CD8-positive, alpha-beta memory T cell (primary cell): ENCODE measurements at regions of chr16 and their contacts with region 1.

Region 1: GRCh38 chr16:66406534-66407221 is 20.4 kb upstream of the BEAN1 start:
- DNase-seq: peak; percentile 74 to 89 (median 82)
- H3K4me3 ChIP-seq: peak overlapping the region; percentile 75
- H3K4me3 Mint-ChIP-seq: peak overlapping the region; percentile 81 to 93 (median 85)
- H3K27ac ChIP-seq: no peak overlapping the region
- H3K27ac Mint-ChIP-seq: peak overlapping the region in 4 of 8 donors; percentile 29 to 76 (median 64)
- H3K4me1 ChIP-seq: peaks cover 21% of the 10 kb centered on the region
- H3K4me1 Mint-ChIP-seq: peaks cover 25 to 29% (median 28%) of the 10 kb centered on the region in 3 donors
- H3K27me3 ChIP-seq: no peaks in the 10 kb centered on the region
- H3K27me3 Mint-ChIP-seq: peaks cover 0 to 12% of the 10 kb centered on the region in 2 donors

Region 2: DNA sequence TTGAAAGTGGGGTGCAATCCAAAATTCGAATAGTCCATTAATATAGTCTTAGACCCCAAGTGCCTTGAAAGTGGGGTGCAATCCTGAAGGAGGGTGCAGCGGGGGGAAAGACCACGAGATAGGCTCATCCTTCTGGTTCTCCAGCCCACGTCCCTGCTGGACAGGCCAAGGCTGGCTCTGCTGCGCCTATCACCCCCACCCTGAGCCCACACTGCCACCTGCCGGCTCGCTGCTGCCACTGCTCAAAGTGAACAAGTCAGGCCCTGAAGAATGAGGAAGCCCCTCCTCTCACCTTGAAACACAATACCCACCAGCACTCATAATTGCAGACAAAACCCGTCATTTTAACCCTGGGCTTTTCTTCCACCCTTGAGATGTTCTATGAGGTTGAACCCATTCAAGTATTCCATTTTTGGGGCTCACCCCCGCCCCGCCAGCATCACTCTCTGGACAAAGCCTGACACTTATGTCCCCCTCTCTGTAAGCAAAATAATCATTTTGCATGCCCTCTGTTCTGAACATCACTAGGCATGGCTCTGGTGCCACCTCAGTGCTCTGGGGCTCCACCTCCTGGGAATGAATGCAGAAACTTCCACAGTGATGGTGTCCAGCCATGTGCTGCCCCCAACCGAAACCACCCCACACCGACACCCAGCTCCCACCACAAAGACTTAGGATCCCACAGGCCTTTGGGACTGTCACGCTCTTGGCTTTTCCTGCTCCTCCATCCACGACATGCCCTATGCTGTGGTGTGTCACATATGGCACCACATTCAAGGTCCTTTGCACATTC is 77.2 kb after region 1 on chr16:
- CTCF ChIA-PET with region 1: interaction called, 57 read pairs
- POLR2A ChIA-PET with region 1: no interaction called
- DNase-seq: peak; percentile 60 to 81 (median 65)
- H3K4me3 ChIP-seq: no peak overlapping the region
- H3K4me3 Mint-ChIP-seq: no peak overlapping the region
- H3K27ac ChIP-seq: no peak overlapping the region
- H3K27ac Mint-ChIP-seq: peak overlapping the region in 6 of 8 donors; percentile 8 to 95 (median 52)
- H3K4me1 ChIP-seq: peaks cover 10% of the 10 kb centered on the region
- H3K4me1 Mint-ChIP-seq: peaks cover 11 to 23% (median 14%) of the 10 kb centered on the region in 3 donors
- H3K27me3 ChIP-seq: no peaks in the 10 kb centered on the region
- H3K27me3 Mint-ChIP-seq: no peaks in the 10 kb centered on the region

Region 3: DNA sequence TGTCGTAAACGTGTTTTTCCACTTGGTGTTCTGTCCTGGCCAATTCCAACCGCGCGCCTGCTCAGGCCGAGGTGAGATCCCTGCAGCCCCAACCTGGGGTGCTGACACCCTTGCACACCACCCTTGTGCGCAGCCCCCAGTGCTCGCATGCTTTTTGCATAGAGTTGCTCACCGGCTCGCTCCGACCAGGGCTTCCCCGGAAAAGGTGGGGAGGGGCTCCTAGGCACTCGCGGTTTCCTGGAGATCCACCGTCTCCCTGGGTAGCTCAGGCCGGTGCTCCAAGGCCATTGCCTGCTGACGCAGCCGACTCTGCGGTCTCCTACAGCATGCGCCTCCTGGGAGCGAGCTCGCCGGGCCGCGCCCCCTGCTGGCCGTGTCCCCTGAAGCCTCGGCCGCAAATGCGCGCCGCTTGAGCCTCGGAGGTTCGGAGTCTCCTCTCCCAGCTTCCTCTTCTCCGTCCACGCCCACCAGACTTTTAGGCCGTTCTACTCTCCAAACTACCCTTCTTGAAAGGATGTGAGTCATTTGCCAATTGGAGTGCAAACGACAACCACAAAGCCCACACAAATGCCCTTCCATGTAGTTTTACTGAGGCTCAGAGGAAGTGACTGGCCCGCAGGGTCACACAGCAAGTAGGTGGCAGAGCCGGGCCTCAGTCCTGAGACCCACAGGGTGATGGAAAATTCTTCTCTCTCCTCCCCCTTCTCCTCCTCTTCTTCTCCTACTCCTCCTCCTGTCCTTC is 466.4 kb after region 1 on chr16:
- CTCF ChIA-PET with region 1: interaction called, 32 read pairs
- POLR2A ChIA-PET with region 1: no interaction called
- DNase-seq: peak; percentile 76 to 91 (median 84)
- H3K4me3 ChIP-seq: peak overlapping the region; percentile 69
- H3K4me3 Mint-ChIP-seq: peak overlapping the region; percentile 73 to 93 (median 83)
- H3K27ac ChIP-seq: peak overlapping the region; percentile 35
- H3K27ac Mint-ChIP-seq: peak overlapping the region; percentile 30 to 99 (median 86)
- H3K4me1 ChIP-seq: peaks cover 17% of the 10 kb centered on the region
- H3K4me1 Mint-ChIP-seq: peaks cover 26 to 27% (median 26%) of the 10 kb centered on the region in 3 donors
- H3K27me3 ChIP-seq: no peaks in the 10 kb centered on the region
- H3K27me3 Mint-ChIP-seq: peaks cover 0 to 2% of the 10 kb centered on the region in 2 donors